ENCODE measurements at regions of chr9 and their contacts with region 1.

Region 1: GRCh38 chr9:114681594-114682332 is at the start of gene TEX48:
- DNase-seq: peak; percentile 91
- ATAC-seq: peak; percentile 87
- H3K4me3 Mint-ChIP-seq: peak within 1 kb of the TSS; percentile 39
- H3K27ac Mint-ChIP-seq: peak within 1 kb of the TSS; percentile 86
- H3K4me1 Mint-ChIP-seq: peaks cover 56% of the 10 kb centered on the region
- H3K27me3 Mint-ChIP-seq: peaks cover 5% of the 10 kb centered on the region
- total RNA-seq, gene TEX48: 0.69 to 0.75 TPM

Region 2: DNA sequence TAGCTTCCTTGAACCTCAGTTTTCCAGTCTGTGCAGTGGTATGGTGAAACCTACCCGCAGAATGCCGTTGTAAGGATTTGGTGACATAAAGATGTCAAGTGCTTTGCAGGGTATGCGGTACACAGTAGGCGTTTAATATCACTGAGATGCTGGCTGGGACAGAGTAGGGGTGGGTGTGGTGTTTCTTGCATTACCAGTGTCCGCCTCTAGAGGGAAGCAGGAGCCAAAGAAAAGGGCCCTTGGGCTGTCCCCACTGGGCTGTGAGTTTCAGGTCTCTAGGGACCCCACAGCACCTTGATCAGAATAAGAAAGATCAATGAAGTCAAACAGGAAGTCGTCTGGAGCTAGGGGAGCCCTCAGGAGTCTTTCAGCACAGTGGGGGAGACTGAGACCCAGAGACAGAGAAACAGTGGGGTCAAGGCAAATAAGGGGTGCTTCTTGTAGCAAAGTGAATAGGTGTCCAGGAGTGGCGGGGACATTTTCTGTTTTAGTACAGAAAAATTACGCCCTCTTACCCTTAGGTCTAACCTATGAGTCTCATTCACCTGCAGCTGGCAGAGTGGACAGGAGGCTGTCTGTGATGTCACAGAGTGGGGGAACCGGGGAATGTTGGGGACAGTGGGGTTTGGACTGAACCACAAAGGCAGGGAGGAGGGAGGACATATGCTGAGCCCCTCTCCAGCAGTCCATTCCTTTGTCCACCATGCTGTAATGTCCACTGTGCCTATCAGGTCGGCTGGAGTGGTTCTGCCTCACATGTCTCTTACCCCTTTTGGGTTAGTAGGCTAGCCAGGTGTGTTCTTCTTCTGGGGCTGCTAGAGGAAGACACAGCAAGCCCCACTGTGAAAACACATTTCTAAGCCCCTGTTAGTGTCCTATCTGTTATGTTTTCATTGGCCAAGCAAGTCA is 19.4 kb before region 1 on chr9:
- CTCF ChIA-PET with region 1: interaction called, 11 read pairs
- POLR2A ChIA-PET with region 1: interaction called, 3 read pairs
- intact Hi-C with region 1: no loop called
- DNase-seq: peak; percentile 80
- ATAC-seq: peak; percentile 92
- H3K4me3 Mint-ChIP-seq: no peak overlapping the region
- H3K27ac Mint-ChIP-seq: no peak overlapping the region
- H3K4me1 Mint-ChIP-seq: peaks cover 9% of the 10 kb centered on the region
- H3K27me3 Mint-ChIP-seq: peaks cover 5% of the 10 kb centered on the region

Region 3: DNA sequence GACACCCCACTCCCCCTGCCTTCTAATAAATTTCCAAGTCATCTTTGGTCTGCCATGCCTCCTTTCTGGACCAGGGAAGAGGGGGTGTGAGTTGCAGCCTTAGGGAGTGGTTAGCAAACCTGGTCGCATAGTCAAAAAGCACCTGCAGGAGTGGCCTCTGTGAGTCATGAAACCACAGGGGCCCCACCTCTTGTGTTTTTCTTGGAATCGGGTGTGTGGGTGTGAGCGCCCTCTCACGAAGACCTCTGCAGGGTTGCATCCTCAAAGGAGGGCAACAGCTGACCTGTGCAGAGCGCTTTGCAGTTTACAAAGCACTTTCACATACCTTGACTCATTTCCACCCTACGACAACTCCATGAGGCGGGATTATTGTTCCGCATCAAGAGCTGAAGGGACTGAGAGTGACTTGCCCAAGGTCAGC is 37.0 kb after region 1 on chr9:
- CTCF ChIA-PET with region 1: interaction called, 6 read pairs
- POLR2A ChIA-PET with region 1: no interaction called
- intact Hi-C with region 1: loop called (anchors 5 kb)
- DNase-seq: peak; percentile 95
- ATAC-seq: peak; percentile 94
- H3K4me3 Mint-ChIP-seq: peak overlapping the region; percentile 15
- H3K27ac Mint-ChIP-seq: peak overlapping the region; percentile 96
- H3K4me1 Mint-ChIP-seq: peaks cover 56% of the 10 kb centered on the region
- H3K27me3 Mint-ChIP-seq: peaks cover 2% of the 10 kb centered on the region

Region 4: GRCh38 chr9:114894801-114895433 is 213.2 kb after region 1 on chr9:
- CTCF ChIA-PET with region 1: interaction called, 11 read pairs
- POLR2A ChIA-PET with region 1: interaction called, 3 read pairs
- intact Hi-C with region 1: no loop called
- DNase-seq: peak; percentile 77
- ATAC-seq: peak; percentile 76
- H3K4me3 Mint-ChIP-seq: peak overlapping the region; percentile 14
- H3K27ac Mint-ChIP-seq: peak overlapping the region; percentile 90
- H3K4me1 Mint-ChIP-seq: peaks cover 21% of the 10 kb centered on the region
- H3K27me3 Mint-ChIP-seq: no peaks in the 10 kb centered on the region

Region 5: DNA sequence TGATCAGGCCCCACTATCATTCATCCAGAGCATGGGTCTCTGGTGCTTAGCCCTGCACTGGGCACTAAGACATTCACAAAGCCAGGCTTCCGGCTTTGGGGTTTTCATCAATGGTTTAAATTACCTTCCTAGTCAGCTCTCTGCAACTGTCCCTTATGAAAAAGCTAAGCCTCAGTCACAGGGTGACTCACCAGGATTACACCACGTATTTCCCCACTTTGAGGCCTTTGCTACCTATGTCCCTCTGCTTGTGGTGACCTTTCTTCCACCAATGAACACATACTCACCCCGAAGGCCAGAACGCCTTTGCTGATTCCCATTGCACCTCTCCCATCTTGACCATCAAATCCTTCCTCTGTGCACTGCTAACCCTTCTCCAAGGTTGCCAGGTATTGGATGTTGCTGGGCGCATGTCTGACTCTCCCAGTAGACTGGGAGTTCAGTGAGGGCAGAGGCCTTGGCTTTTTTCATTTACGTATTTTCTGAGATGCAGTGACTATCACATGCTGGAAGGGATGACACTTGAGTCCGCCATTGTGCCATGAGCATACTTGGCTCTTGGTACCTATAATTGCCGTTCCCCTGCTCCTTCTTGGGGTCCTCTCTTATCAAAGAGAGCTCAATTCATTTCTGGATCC is 307.3 kb after region 1 on chr9:
- CTCF ChIA-PET with region 1: interaction called, 10 read pairs
- POLR2A ChIA-PET with region 1: interaction called, 4 read pairs
- intact Hi-C with region 1: loop called in 1 of 2 experiments (anchors 1 kb)
- DNase-seq: peak; percentile 64
- ATAC-seq: peak; percentile 63
- H3K4me3 Mint-ChIP-seq: peak overlapping the region; percentile 19
- H3K27ac Mint-ChIP-seq: peak overlapping the region; percentile 95
- H3K4me1 Mint-ChIP-seq: peaks cover 68% of the 10 kb centered on the region
- H3K27me3 Mint-ChIP-seq: no peaks in the 10 kb centered on the region

Region 6: DNA sequence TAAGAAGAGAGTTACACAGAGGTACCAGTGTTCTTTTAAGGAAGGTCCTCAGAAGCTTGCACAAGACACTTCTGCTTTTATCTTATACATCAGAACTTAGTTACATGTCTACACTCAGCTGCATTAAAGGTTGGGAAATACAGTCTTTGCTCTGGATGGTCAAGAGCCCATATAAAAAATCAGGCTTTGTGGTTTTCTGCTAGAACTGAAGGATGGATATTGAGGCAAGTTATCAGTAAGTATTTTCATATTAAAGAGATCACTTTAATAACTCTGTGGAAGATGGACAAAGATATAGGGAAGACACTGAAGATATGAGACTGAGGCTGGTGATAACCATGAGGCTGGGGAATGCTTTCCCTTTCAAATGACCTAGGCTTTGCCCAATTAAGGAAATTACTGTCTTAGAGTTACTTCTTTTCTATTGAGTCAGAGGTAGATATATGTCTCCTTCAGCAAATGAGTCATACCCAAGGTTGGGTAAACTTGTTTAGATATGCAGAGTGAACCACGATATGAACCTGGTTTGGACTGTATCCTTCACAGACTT is 523.2 kb after region 1 on chr9:
- CTCF ChIA-PET with region 1: no interaction called
- POLR2A ChIA-PET with region 1: no interaction called
- intact Hi-C with region 1: loop called in 1 of 2 experiments (anchors 5 kb)
- DNase-seq: no peak
- ATAC-seq: peak; percentile 78
- H3K4me3 Mint-ChIP-seq: no peak overlapping the region
- H3K27ac Mint-ChIP-seq: peak overlapping the region; percentile 20
- H3K4me1 Mint-ChIP-seq: peaks cover 38% of the 10 kb centered on the region
- H3K27me3 Mint-ChIP-seq: peaks cover 32% of the 10 kb centered on the region